ENCODE measurements at regions of chr9 and their contacts with region 1.

Region 1: DNA sequence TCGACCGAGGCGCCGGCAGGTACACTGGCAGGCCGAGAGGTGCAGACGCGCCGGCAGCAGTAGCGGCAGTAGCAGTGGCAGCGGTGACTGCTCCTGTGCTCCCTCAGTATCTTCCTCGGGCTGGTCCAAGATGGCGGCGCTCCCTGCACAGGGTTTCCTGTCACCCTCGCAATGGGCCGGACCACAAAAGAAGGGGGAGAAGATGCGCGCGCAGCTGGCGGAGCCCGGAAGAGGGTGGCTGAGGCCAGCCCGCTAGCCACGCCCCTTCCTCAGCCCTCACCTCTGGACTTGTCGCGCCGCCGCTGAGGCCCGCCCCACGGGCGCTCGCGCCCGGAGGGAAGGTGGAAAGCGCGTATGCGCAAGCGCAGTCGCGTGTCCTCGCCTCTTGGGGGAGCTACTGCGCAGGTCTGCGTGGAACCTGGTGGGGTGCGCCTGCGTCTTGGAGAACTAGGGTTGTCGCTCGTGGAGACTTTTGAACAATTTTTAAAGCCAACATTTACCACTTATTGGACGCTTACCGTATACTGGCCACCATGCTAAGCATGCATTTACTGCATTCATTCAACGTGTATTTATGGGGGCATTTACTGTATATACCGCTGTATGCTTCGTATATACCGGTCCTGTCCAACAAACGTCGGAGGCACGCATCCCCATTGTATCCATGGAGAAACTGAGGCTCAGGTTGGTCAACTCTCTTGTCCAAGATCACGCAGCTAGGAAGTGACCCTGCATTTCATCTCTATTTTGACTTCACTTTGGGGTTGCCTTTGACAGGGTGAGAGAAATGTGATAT is at the start of gene RAB14:
- DNase-seq: peak; percentile 95
- ATAC-seq: peak; percentile 95
- H3K4me3 ChIP-seq: peak within 1 kb of the TSS; percentile 88 to 93 (median 91)
- H3K27ac ChIP-seq: peak within 1 kb of the TSS; percentile 81
- H3K4me1 ChIP-seq: peaks cover 57% of the 10 kb centered on the region
- H3K27me3 ChIP-seq: no peaks in the 10 kb centered on the region; a peak in 1 of 5 replicates
- CTCF ChIP-seq: peak; percentile 91
- EP300 ChIP-seq: 0 out of 4 replicates have a peak, but pooled peaks of 1 of the 2 experiments have one; percentile 17
- POLR2A ChIP-seq: peak; percentile 73 to 81
- RAD21 ChIP-seq: peak; percentile 54
- total RNA-seq, gene RAB14: 19.3 and 42.2 TPM in 2 replicates

Region 2: DNA sequence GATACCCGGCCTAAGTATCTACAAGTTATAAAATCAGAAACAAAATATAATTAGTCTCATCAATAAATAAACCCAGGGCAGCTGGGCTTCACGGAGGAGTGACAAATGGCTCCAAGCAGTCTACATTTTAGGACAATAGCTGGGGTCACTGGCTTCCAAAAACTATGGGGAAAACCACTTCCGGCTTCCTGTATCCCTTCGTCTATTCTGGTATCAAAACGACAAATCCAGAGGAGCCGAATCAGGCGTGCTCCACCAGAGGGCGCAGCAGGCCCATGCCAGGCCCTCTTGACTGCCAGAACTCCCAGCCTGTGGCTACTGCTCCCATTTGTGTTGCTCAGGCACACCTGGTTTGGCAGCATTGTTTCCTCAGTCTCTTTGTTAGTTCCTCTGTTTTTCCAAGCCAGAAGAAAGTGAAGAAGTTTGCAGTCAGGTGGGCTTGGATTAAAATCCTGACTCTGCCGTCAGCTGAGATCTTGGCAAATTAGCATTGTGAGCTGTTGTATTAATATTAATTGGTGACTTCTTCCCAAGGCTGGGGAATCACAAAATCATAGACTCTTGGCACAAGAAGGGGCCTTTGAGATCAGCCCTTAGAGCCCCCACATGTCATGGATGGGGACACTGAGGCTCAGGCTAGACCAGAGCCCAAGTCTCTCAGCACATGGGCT is 11.3 kb after region 1 on chr9:
- CTCF ChIA-PET with region 1: no interaction called
- POLR2A ChIA-PET with region 1: interaction called, 18 read pairs
- in situ Hi-C with region 1: no loop called
- intact Hi-C with region 1: no loop called
- DNase-seq: peak; percentile 77
- ATAC-seq: peak; percentile 96
- H3K4me3 ChIP-seq: peak overlapping the region in 1 of 3 experiments; percentile 18; a peak in 1 of 6 replicates
- H3K27ac ChIP-seq: no peak overlapping the region
- H3K4me1 ChIP-seq: peaks cover 8% of the 10 kb centered on the region
- H3K27me3 ChIP-seq: no peaks in the 10 kb centered on the region
- CTCF ChIP-seq: peak; percentile 96
- EP300 ChIP-seq: no peak
- POLR2A ChIP-seq: no peak
- RAD21 ChIP-seq: peak; percentile 94

Region 3: GRCh38 chr9:121852651-121853616 is 651.0 kb after region 1 on chr9:
- CTCF ChIA-PET with region 1: no interaction called
- POLR2A ChIA-PET with region 1: no interaction called
- in situ Hi-C with region 1: no loop called
- intact Hi-C with region 1: no loop called
- DNase-seq: no peak
- ATAC-seq: 0 out of 3 replicates have a peak, but pooled peaks have one; percentile 26
- H3K4me3 ChIP-seq: no peak overlapping the region
- H3K27ac ChIP-seq: no peak overlapping the region
- H3K4me1 ChIP-seq: no peaks in the 10 kb centered on the region
- H3K27me3 ChIP-seq: peaks cover 5 to 30% of the 10 kb centered on the region in 2 experiments; a peak in 4 of 5 replicates
- CTCF ChIP-seq: no peak
- EP300 ChIP-seq: no peak
- POLR2A ChIP-seq: no peak
- RAD21 ChIP-seq: no peak